Heart left ventricle (tissue), 16 donors: ENCODE measurements at regions of chr20 and their contacts with region 1.

Region 1: GRCh38 chr20:1555952-1556351 is 1.6 kb downstream of the SIRPD start:
- DNase-seq: no peak
- ATAC-seq: no peak
- H3K4me3 ChIP-seq: no peak overlapping the region
- H3K27ac ChIP-seq: no peak overlapping the region
- H3K4me1 ChIP-seq: no peaks in the 10 kb centered on the region
- H3K27me3 ChIP-seq: no peaks in the 10 kb centered on the region
- CTCF ChIP-seq: no peak
- POLR2A ChIP-seq: no peak

Region 2: GRCh38 chr20:1631309-1632151 is 75.6 kb after region 1 on chr20:
- intact Hi-C with region 1: loop called in 1 of 10 experiments (anchors 10 kb)
- DNase-seq: no peak
- ATAC-seq: no peak
- H3K4me3 ChIP-seq: no peak overlapping the region
- H3K27ac ChIP-seq: no peak overlapping the region
- H3K4me1 ChIP-seq: peaks cover 0 to 10% (median 0%) of the 10 kb centered on the region in 12 donors
- H3K27me3 ChIP-seq: peaks cover 0 to 17% (median 0%) of the 10 kb centered on the region in 9 donors
- CTCF ChIP-seq: no peak
- POLR2A ChIP-seq: no peak